ENCODE measurements at regions of chr7 and their contacts with region 1.

Region 1: GRCh38 chr7:137943147-137943551 is 58.7 kb downstream of the CREB3L2 start:
- DNase-seq: peak in 1 of 2 donors; percentile 77
- ATAC-seq: peak; percentile 86
- H3K4me3 ChIP-seq: no peak overlapping the region
- H3K27ac ChIP-seq: peak overlapping the region; percentile 86 to 95
- H3K4me1 ChIP-seq: peaks cover 14 to 38% of the 10 kb centered on the region in 2 donors
- H3K27me3 ChIP-seq: no peaks in the 10 kb centered on the region

Region 2: GRCh38 chr7:137981670-137982069 is 38.5 kb after region 1 on chr7:
- intact Hi-C with region 1: loop called (anchors 5 kb)
- DNase-seq: no peak
- ATAC-seq: no peak
- H3K4me3 ChIP-seq: no peak overlapping the region
- H3K27ac ChIP-seq: peak overlapping the region; percentile 94 to 99
- H3K4me1 ChIP-seq: peaks cover 27 to 29% of the 10 kb centered on the region in 2 donors
- H3K27me3 ChIP-seq: no peaks in the 10 kb centered on the region

Region 3: GRCh38 chr7:137990251-137990941 is 47.2 kb after region 1 on chr7:
- intact Hi-C with region 1: loop called in 1 of 2 experiments (anchors 2 kb)
- DNase-seq: no peak
- ATAC-seq: peak; percentile 40
- H3K4me3 ChIP-seq: no peak overlapping the region
- H3K27ac ChIP-seq: peak overlapping the region; percentile 96 to 97
- H3K4me1 ChIP-seq: peaks cover 12 to 28% of the 10 kb centered on the region in 2 donors
- H3K27me3 ChIP-seq: no peaks in the 10 kb centered on the region

Measured in aorta (tissue), 5 donors.